AG04450 (cell line): ENCODE measurements at regions of chr9 and their contacts with region 1.

Region 1: GRCh38 chr9:86126998-86127972 is 27.9 kb upstream of the GOLM1 start:
- DNase-seq: peak; percentile 47
- H3K4me3 ChIP-seq: no peak overlapping the region
- H3K27ac ChIP-seq: no peak overlapping the region
- H3K27me3 ChIP-seq: peaks cover 10% of the 10 kb centered on the region
- CTCF ChIP-seq: no peak

Region 2: GRCh38 chr9:86193088-86193487 is 65.8 kb after region 1 on chr9:
- CTCF ChIA-PET with region 1: interaction called, 12 read pairs
- POLR2A ChIA-PET with region 1: no interaction called
- DNase-seq: no peak
- H3K4me3 ChIP-seq: no peak overlapping the region
- H3K27ac ChIP-seq: no peak overlapping the region
- H3K27me3 ChIP-seq: no peaks in the 10 kb centered on the region
- CTCF ChIP-seq: no peak

Region 3: GRCh38 chr9:86337469-86338108 is 210.3 kb after region 1 on chr9:
- CTCF ChIA-PET with region 1: no interaction called
- POLR2A ChIA-PET with region 1: no interaction called
- DNase-seq: no peak
- H3K4me3 ChIP-seq: no peak overlapping the region
- H3K27ac ChIP-seq: no peak overlapping the region
- H3K27me3 ChIP-seq: no peaks in the 10 kb centered on the region
- CTCF ChIP-seq: no peak